Dendritic cell treated with granulocyte-macrophage colony-stimulating factor and Interleukin-4, amounts not matched to agents 40 ng/mL and 50 ng/mL, for 4 days (primary cell): ENCODE measurements at regions of chr6 and their contacts with region 1.

Region 1: GRCh38 chr6:109059571-109060021 is 35.0 kb downstream of the SESN1 start:
- H3K4me3 Mint-ChIP-seq: no peak overlapping the region
- H3K27ac Mint-ChIP-seq: peak overlapping the region; percentile 38
- H3K4me1 Mint-ChIP-seq: peaks cover 28% of the 10 kb centered on the region
- H3K27me3 Mint-ChIP-seq: no peaks in the 10 kb centered on the region

Region 2: DNA sequence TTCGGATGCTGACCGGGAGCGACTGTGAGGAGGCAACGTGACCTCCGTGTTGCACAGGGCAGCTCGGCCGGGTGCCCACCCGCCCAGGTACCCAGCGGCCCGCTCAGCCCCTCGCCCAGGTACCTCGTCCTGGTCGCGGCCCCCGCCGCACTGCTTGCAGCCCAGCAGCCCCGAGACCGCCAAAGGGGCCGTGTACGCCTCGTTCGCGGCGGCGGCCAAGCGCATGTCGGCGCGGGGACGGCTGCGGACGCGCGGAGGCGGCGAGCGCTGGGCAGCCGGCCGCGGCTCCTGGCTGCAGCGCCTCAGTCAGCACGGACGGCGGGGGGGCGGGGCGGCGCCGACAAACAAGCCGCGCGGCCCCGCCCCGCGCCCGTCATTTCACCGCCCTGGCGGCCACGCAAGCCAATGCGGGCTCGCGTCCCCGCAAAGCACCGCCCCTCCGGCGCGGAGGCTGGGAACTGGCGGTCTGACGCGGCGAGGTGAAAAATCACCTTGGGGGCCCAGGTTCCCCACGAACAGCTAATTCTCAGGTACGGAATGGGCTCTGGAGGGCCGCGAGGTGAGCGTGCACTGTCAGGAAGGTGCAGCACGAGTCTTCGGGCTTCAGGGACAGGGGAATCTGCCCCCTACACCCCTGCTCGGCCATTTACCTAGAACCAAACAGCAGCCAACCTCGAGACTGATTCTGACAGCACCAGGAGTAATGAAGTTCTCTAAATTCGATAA is 50.2 kb before region 1 on chr6:
- intact Hi-C with region 1: loop called (anchors 10 kb)
- H3K4me3 Mint-ChIP-seq: peak overlapping the region; percentile 92
- H3K27ac Mint-ChIP-seq: peak overlapping the region; percentile 92
- H3K4me1 Mint-ChIP-seq: peaks cover 34% of the 10 kb centered on the region
- H3K27me3 Mint-ChIP-seq: no peaks in the 10 kb centered on the region

Region 3: DNA sequence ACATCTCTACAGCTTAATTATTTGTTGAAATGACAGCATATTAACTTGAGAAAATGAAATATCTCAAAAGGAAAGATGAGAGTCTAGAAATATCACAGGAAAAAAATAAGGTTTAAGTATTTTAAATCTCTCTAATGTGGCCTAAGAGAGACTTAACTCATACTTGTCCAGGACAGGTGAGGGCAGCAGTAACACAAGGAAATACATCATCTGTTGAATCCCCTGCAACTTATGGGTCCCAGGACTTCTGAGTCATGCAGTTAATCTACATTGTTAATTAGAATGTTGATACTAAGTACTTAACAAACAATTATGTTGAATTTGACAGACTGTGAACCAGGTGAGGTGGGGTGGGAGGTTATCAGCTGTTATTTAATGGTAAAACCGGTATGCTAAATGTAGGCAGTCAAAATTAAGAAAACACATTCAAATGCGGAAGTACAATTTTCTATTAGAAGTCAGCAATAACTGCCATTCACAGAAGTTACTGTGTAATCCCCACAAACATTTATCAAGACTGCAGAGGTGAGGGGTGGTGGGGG is 123.6 kb after region 1 on chr6:
- intact Hi-C with region 1: no loop called
- H3K4me3 Mint-ChIP-seq: no peak overlapping the region
- H3K27ac Mint-ChIP-seq: no peak overlapping the region
- H3K4me1 Mint-ChIP-seq: no peaks in the 10 kb centered on the region
- H3K27me3 Mint-ChIP-seq: peaks cover 6% of the 10 kb centered on the region